ENCODE measurements at regions of chr13 and their contacts with region 1.

Region 1: DNA sequence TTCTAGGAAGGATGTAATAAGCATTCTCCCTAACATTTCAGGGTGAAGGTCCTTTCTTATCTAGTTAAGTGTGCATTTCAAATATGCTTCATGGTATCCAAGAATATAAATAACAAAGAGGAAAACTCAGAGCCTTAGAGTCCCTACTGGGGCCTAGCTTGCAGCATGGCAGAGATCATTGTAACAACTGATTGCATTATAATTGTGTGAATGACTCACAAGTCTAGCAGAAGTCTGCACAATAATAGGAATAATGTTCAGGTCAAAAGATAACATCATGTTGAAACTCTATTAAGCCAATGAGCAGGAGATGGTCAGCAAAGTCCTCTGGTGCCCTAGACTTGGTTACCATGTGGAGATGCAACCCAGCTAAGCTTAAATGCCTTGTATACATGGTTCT is 3.4 kb downstream of the POSTN start:
- DNase-seq: no peak
- CTCF ChIP-seq: no peak

Region 2: DNA sequence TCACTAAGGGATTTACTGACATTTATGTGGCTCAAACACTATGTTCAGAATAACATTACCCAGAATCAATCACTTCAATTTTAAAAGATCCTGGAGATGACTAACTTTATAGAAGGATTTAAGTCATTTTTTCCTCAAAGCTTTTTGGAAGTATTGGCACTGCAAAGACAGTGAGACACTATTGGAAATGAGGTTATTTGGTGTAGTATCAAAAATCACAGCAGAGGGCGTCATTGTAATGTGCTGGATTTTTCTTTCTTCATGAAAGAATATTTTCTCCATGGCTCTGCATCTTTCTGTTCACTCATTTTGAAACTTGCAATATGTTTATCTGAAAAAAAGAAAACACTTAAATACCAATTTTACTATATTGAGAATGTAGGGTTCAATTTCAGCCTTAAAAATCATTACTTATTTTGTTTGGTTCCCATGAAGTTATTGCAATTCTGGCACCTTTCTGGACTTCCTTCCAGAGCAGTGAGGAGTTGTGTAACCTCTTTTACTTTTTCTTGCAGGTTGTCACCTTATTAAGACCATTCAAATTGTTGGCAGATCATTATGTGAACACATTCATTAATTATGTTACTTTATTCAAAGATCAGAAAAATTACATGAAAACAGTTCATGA is 486.0 kb before region 1 on chr13:
- in situ Hi-C with region 1: loop called (anchors 25 kb)
- DNase-seq: no peak
- CTCF ChIP-seq: peak; percentile 10

Measured in GM13976 (cell line).